ENCODE measurements at regions of chr22 and their contacts with region 1.

Region 1: DNA sequence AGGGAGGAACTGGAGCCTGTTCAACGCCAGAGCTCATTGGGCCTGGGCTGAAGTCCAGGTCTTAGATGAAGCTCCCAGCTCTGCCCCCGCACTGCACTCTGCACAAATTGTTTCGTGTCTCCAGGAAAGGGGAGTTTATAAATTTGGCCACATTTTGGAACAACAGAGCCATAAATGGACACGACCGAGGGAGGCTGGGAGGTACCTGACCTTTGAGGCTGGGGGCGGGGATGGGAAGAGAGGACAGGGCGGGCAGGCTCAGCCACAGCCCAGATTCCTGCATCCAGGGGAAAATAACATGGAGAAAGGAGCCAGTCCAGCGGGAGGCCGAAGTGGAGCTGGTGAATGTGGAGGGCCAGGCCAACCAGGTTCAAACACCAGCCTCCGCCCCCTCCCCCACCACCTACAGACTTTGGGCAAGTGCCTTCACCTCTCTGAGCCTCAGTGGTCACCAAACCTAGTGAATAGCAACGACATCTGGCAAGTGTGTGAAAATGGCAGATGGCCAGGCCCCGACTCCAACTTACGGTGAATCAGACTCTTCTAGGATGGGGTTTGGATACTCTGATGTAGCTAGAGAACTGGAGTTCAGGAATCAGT is 36.8 kb upstream of the SMTN start:
- DNase-seq: no peak
- H3K4me3 ChIP-seq: no peak overlapping the region
- H3K27me3 ChIP-seq: no peaks in the 10 kb centered on the region
- CTCF ChIP-seq: no peak

Region 2: DNA sequence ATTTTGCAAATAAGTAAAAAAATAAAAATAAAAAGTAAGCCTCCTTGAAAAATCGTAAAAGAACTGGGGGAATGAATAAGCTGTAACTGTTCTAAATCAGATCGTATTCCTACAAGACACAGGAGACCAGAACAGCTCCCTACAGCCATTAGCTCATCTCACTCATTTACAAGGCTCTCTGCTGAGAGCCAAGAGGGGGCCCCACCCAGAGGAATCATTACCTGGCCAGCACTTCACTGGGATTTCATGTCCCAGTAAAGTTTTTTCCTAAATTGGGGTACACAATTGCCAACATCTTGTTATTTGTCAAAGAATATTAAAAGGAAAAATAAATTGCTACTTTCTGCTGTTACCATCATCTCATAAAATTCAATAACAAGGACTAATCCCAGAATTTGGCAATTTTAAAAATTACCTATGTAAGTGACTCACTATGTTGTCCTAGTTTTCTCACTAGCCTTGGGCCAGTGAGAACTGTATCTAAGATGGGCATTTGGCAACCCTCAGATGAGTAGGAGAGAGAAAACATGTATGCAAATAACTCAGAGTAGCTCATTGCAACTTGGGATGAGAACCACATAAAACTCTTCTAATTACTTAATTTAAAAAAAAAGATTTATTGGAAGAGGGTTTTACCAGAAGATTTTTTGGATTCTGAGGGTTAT is 18.3 kb after region 1 on chr22:
- CTCF ChIA-PET with region 1: interaction called, 3 read pairs
- POLR2A ChIA-PET with region 1: interaction called, 18 read pairs
- DNase-seq: no peak
- H3K4me3 ChIP-seq: no peak overlapping the region
- H3K27me3 ChIP-seq: no peaks in the 10 kb centered on the region
- CTCF ChIP-seq: no peak

Region 3: GRCh38 chr22:31093086-31093850 is 48.9 kb after region 1 on chr22:
- CTCF ChIA-PET with region 1: no interaction called
- POLR2A ChIA-PET with region 1: no interaction called
- DNase-seq: no peak
- H3K4me3 ChIP-seq: no peak overlapping the region
- H3K27me3 ChIP-seq: no peaks in the 10 kb centered on the region
- CTCF ChIP-seq: no peak

Region 4: GRCh38 chr22:32518848-32519247 is 1474.5 kb after region 1 on chr22:
- CTCF ChIA-PET with region 1: no interaction called
- POLR2A ChIA-PET with region 1: no interaction called
- DNase-seq: no peak
- H3K4me3 ChIP-seq: no peak overlapping the region
- H3K27me3 ChIP-seq: no peaks in the 10 kb centered on the region
- CTCF ChIP-seq: no peak

Measured in BJ (cell line).